ENCODE measurements at regions of chr14 and their contacts with region 1.

Region 1: DNA sequence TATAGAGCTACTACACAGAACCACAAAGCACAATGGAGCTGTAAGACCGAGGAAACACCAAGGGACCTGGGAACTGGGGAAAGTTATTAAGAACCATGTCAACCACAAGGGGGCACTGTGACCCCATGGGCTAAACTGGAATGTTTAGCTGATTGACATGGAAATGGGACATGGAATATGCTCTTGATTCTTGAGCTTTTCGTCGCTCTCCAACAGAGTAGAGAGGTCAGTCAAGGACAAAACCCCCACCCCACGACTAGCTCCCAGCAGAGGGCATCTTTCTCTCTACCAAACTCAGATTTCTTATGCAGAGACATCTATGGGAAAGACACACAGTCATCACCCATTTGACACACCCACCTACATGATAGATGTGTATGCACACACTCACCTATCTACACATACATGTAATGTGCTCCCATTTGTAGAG is 10.1 kb downstream of the NDRG2 start:
- DNase-seq: peak; percentile 83
- H3K4me3 ChIP-seq: no peak overlapping the region
- H3K27ac ChIP-seq: no peak overlapping the region
- H3K4me1 ChIP-seq: no peaks in the 10 kb centered on the region
- H3K27me3 ChIP-seq: peaks cover 19 to 23% of the 10 kb centered on the region in 2 experiments
- CTCF ChIP-seq: peak; percentile 77 to 78
- POLR2A ChIP-seq: no peak

Region 2: DNA sequence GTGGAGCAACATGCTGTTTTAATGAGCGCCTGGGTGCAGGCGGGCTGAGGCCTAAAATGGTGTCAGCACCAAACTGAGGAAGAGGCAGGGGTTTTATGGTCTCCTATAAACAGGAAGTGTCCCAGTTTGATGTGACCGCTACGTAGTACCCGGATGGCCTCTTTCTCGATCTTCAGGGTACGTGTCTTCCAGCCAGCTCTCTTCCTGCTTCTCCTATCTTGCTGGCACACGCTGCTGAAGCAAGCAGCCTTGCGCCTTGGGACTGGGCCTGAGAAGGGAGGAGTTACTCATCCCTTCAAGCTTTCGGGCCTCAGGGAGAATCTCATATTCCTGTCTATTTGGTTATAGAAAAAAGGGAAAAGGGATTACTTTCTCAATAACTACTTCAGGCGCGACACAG is 183.9 kb before region 1 on chr14:
- CTCF ChIA-PET with region 1: no interaction called
- POLR2A ChIA-PET with region 1: no interaction called
- dilution Hi-C with region 1: no loop called
- intact Hi-C with region 1: no loop called
- DNase-seq: no peak
- H3K4me3 ChIP-seq: no peak overlapping the region
- H3K27ac ChIP-seq: no peak overlapping the region
- H3K4me1 ChIP-seq: peaks cover 9% of the 10 kb centered on the region
- H3K27me3 ChIP-seq: no peaks in the 10 kb centered on the region
- CTCF ChIP-seq: no peak
- POLR2A ChIP-seq: no peak

Region 3: GRCh38 chr14:20970983-20971704 is 43.6 kb before region 1 on chr14:
- CTCF ChIA-PET with region 1: interaction called, 30 read pairs
- POLR2A ChIA-PET with region 1: no interaction called
- dilution Hi-C with region 1: no loop called
- intact Hi-C with region 1: no loop called
- DNase-seq: peak; percentile 86
- H3K4me3 ChIP-seq: peak overlapping the region; percentile 15 to 64 (median 55)
- H3K27ac ChIP-seq: peak overlapping the region; percentile 8
- H3K4me1 ChIP-seq: peaks cover 21% of the 10 kb centered on the region
- H3K27me3 ChIP-seq: peaks cover 8 to 14% of the 10 kb centered on the region in 2 experiments
- CTCF ChIP-seq: peak; percentile 98 to 99
- POLR2A ChIP-seq: no peak

Region 4: GRCh38 chr14:21024585-21025370 is 10.0 kb after region 1 on chr14 and contains the start of gene NDRG2:
- CTCF ChIA-PET with region 1: interaction called, 86 read pairs
- POLR2A ChIA-PET with region 1: no interaction called
- dilution Hi-C with region 1: no loop called
- intact Hi-C with region 1: no loop called
- DNase-seq: no peak
- H3K4me3 ChIP-seq: peak within 1 kb of the TSS in 1 of 3 experiments; percentile 22
- H3K27ac ChIP-seq: no peak within 1 kb of the TSS
- H3K4me1 ChIP-seq: no peaks in the 10 kb centered on the region
- H3K27me3 ChIP-seq: peaks cover 43 to 59% of the 10 kb centered on the region in 2 experiments
- CTCF ChIP-seq: no peak
- POLR2A ChIP-seq: no peak
- total RNA-seq, gene NDRG2: not detected in 2 replicates

Region 5: DNA sequence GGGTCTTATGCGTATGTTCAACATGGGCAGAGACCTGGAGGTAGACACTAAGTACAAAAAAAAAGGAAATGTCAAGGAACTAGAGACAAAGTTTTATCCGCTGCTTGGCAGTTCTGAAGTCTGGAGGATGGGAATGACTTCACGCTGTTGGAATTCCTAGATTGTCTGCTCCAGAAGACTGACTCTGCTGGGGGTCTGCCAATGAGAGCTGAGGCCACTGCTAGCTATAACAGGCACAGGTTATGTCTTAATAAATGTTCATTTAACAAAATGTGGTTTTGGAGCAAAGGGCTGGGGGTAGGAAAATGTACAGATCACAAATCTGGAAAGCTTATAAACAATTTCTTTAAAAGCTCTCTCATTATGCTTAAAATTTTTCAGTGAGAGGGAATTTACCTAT is 48.7 kb after region 1 on chr14:
- CTCF ChIA-PET with region 1: interaction called, 26 read pairs
- POLR2A ChIA-PET with region 1: no interaction called
- dilution Hi-C with region 1: no loop called
- intact Hi-C with region 1: loop called (anchors 1 kb)
- DNase-seq: no peak
- H3K4me3 ChIP-seq: no peak overlapping the region
- H3K27ac ChIP-seq: no peak overlapping the region
- H3K4me1 ChIP-seq: no peaks in the 10 kb centered on the region
- H3K27me3 ChIP-seq: peaks cover 17 to 38% of the 10 kb centered on the region in 2 experiments
- CTCF ChIP-seq: no peak
- POLR2A ChIP-seq: no peak

Region 6: GRCh38 chr14:21092273-21093011 is 77.7 kb after region 1 on chr14:
- CTCF ChIA-PET with region 1: interaction called, 131 read pairs
- POLR2A ChIA-PET with region 1: no interaction called
- dilution Hi-C with region 1: no loop called
- intact Hi-C with region 1: loop called (anchors 1 kb)
- DNase-seq: peak; percentile 68
- H3K4me3 ChIP-seq: no peak overlapping the region
- H3K27ac ChIP-seq: no peak overlapping the region
- H3K4me1 ChIP-seq: peaks cover 3% of the 10 kb centered on the region
- H3K27me3 ChIP-seq: peaks cover 0 to 4% of the 10 kb centered on the region in 2 experiments
- CTCF ChIP-seq: peak; percentile 100
- POLR2A ChIP-seq: no peak

Region 7: GRCh38 chr14:21136024-21136423 is 121.2 kb after region 1 on chr14:
- CTCF ChIA-PET with region 1: interaction called, 22 read pairs
- POLR2A ChIA-PET with region 1: no interaction called
- dilution Hi-C with region 1: no loop called
- intact Hi-C with region 1: no loop called
- DNase-seq: peak; percentile 21
- H3K4me3 ChIP-seq: no peak overlapping the region
- H3K27ac ChIP-seq: no peak overlapping the region
- H3K4me1 ChIP-seq: no peaks in the 10 kb centered on the region
- H3K27me3 ChIP-seq: no peaks in the 10 kb centered on the region
- CTCF ChIP-seq: peak; percentile 41 to 43
- POLR2A ChIP-seq: no peak

Measured in endothelial cell of umbilical vein (primary cell).